ENCODE measurements at regions of chr2 and their contacts with region 1.

Region 1: DNA sequence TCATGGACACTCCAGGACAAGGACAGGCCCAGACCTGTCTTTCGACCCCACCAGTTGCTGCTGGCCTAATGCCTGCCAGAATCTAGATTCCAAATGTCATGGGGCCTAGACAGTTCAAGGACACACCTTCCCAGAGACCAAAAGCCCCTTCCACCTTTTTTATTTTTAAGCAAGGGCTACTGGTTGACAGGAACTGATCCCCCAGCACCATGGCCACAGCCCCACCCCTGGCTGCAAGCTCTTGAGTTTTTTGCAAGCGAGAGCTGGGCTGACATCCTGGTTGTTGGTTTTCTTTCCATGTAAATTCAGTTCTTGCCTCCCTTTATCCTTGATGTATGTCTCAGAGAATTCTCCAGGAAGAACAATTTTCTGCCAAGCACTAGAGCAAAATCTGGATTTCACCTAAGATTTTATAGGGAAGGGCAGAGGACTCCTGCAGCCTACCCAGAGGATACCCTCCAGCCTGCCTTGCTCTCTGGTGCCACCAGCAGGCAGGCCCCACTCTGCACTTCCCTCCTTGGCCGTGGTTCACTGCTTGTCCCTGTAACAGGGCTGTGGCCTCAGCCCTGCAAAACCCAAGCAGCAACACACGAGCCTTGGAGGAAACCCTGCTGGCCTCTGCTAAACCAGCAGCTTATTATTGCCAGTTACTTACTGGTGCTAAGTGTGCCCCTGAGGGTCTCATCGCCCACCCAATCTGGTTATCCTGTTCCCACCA is 97.7 kb downstream of the TWIST2 start:
- DNase-seq: peak; percentile 45
- ATAC-seq: no peak
- H3K4me3 ChIP-seq: no peak overlapping the region
- H3K27ac ChIP-seq: no peak overlapping the region
- H3K4me1 ChIP-seq: peaks cover 50% of the 10 kb centered on the region
- H3K27me3 ChIP-seq: no peaks in the 10 kb centered on the region
- CTCF ChIP-seq: peak; percentile 61

Region 2: GRCh38 chr2:238864207-238865014 is 81.2 kb before region 1 on chr2:
- CTCF ChIA-PET with region 1: no interaction called
- POLR2A ChIA-PET with region 1: no interaction called
- intact Hi-C with region 1: loop called (anchors 5 kb)
- DNase-seq: peak; percentile 96
- ATAC-seq: peak; percentile 99
- H3K4me3 ChIP-seq: peak overlapping the region; percentile 32
- H3K27ac ChIP-seq: peak overlapping the region; percentile 83
- H3K4me1 ChIP-seq: peaks cover 31% of the 10 kb centered on the region
- H3K27me3 ChIP-seq: no peaks in the 10 kb centered on the region
- CTCF ChIP-seq: no peak

Region 3: GRCh38 chr2:239006622-239007300 is 61.2 kb after region 1 on chr2:
- CTCF ChIA-PET with region 1: no interaction called
- POLR2A ChIA-PET with region 1: no interaction called
- intact Hi-C with region 1: loop called (anchors 2 kb)
- DNase-seq: peak; percentile 94
- ATAC-seq: peak; percentile 95
- H3K4me3 ChIP-seq: no peak overlapping the region
- H3K27ac ChIP-seq: peak overlapping the region; percentile 25
- H3K4me1 ChIP-seq: peaks cover 42% of the 10 kb centered on the region
- H3K27me3 ChIP-seq: no peaks in the 10 kb centered on the region
- CTCF ChIP-seq: no peak

Measured in PC-3 (cell line).